ENCODE measurements at regions of chr13 and their contacts with region 1.

Region 1: GRCh38 chr13:30978981-30979956 is 46.8 kb downstream of the TEX26 start:
- DNase-seq: peak; percentile 38
- ATAC-seq: peak; percentile 81
- H3K4me3 ChIP-seq: no peak overlapping the region; a peak in 1 of 4 replicates
- H3K27ac ChIP-seq: peak overlapping the region; percentile 1; the same call in 1 of the 2 replicates
- H3K4me1 ChIP-seq: peaks cover 18 to 25% of the 10 kb centered on the region in 2 experiments
- H3K27me3 ChIP-seq: no peaks in the 10 kb centered on the region
- CTCF ChIP-seq: peak; percentile 46 to 96 (median 95); a peak in 5 of 6 replicates
- POLR2A ChIP-seq: no peak
- RAD21 ChIP-seq: peak; percentile 60

Region 2: DNA sequence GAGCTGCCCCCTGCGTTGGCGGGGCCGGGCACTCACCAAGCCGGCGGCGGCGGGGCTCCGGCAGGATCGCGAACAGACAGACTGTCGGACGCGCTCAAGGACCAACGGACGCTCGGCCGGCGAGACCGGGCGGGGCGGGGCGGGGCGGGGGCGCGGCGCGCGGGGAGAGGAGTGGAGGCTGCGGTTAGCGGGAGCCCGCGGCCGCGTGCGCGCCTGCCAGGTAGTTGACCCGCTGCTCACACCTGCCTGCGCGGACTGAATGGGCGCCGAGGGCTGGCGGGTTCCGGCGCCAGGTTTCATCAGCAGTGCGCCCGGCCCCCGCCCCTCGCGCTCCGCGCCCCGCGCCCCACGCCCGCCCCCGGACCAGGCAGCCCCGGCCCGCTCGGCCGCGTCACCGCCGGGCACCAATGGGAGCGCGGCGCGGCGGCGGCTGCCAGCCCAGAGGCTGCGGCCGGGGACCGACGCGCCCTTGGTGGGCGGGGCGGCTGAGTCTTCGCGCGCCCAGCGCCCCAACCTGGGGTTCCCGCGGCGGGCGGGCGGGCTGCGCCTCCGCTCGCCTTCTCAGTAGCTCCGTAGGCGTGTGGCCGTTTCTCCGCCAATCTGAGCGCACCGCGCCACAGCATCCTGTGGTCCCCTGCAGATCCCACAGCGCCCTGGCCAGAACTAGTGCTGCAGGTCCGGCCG is 1383.7 kb before region 1 on chr13 and contains the start of gene SLC7A1:
- CTCF ChIA-PET with region 1: no interaction called
- POLR2A ChIA-PET with region 1: no interaction called
- RAD21 ChIA-PET with region 1: no interaction called
- intact Hi-C with region 1: no loop called
- DNase-seq: peak; percentile 59
- ATAC-seq: peak; percentile 91
- H3K4me3 ChIP-seq: peak within 1 kb of the TSS; percentile 72 to 82
- H3K27ac ChIP-seq: peak within 1 kb of the TSS; percentile 95
- H3K4me1 ChIP-seq: peaks cover 8 to 21% of the 10 kb centered on the region in 2 experiments
- H3K27me3 ChIP-seq: no peaks in the 10 kb centered on the region
- CTCF ChIP-seq: no peak
- POLR2A ChIP-seq: no peak
- RAD21 ChIP-seq: no peak
- total RNA-seq, gene SLC7A1: 124 TPM

Region 3: DNA sequence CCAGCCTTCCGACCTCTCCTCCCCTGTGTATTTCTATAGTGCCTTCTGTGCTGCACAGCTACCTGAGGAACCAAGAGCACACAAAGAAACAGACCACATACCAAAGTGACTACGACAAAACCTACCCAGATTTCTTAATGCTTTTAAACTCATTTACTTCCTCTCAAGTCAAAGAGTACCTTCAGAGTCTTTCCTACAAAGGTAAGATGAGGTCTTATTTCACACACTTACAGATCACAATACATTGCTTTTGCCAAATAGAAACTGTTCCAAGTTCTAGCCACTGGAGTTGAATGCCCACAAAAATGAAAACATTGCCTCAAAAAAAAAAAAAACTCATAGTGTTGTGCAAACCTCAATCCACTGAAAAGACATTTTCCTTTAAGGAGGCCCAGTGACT is 10.4 kb before region 1 on chr13:
- CTCF ChIA-PET with region 1: interaction called, 19 read pairs
- POLR2A ChIA-PET with region 1: no interaction called
- RAD21 ChIA-PET with region 1: no interaction called
- intact Hi-C with region 1: no loop called
- DNase-seq: no peak
- ATAC-seq: no peak
- H3K4me3 ChIP-seq: no peak overlapping the region
- H3K27ac ChIP-seq: no peak overlapping the region
- H3K4me1 ChIP-seq: peaks cover 4 to 9% of the 10 kb centered on the region in 2 experiments; a peak in 2 of 4 replicates
- H3K27me3 ChIP-seq: no peaks in the 10 kb centered on the region
- CTCF ChIP-seq: no peak
- POLR2A ChIP-seq: no peak
- RAD21 ChIP-seq: no peak

Region 4: DNA sequence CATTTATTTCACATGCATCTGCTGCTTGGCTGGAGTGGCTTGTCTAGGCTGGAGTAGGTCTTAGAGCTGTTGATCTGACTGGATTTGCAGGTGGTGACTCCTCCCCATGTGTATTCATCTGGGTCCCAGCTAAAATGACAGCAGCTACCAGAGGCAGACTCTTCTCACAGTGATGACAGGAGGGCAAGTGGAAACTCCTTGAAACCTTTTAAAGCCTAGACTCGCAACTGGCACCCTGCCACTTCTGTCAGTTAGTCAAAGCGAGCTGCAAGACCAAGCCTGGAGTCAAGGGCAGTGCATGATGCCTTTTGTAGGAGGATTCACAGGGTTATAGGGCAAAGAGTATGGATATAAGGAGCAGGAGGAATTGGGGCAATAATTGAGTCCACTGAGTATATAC is 18.4 kb after region 1 on chr13:
- CTCF ChIA-PET with region 1: interaction called, 14 read pairs
- POLR2A ChIA-PET with region 1: no interaction called
- RAD21 ChIA-PET with region 1: interaction called in 1 of 2 experiments, 3 read pairs
- intact Hi-C with region 1: no loop called
- DNase-seq: no peak
- ATAC-seq: no peak
- H3K4me3 ChIP-seq: no peak overlapping the region
- H3K27ac ChIP-seq: no peak overlapping the region
- H3K4me1 ChIP-seq: peaks cover 3 to 5% of the 10 kb centered on the region in 2 experiments; a peak in 2 of 4 replicates
- H3K27me3 ChIP-seq: no peaks in the 10 kb centered on the region
- CTCF ChIP-seq: no peak
- POLR2A ChIP-seq: no peak
- RAD21 ChIP-seq: no peak